Gastrocnemius medialis (tissue), 4 donors: ENCODE measurements at regions of chr11 and their contacts with region 1.

Region 1: DNA sequence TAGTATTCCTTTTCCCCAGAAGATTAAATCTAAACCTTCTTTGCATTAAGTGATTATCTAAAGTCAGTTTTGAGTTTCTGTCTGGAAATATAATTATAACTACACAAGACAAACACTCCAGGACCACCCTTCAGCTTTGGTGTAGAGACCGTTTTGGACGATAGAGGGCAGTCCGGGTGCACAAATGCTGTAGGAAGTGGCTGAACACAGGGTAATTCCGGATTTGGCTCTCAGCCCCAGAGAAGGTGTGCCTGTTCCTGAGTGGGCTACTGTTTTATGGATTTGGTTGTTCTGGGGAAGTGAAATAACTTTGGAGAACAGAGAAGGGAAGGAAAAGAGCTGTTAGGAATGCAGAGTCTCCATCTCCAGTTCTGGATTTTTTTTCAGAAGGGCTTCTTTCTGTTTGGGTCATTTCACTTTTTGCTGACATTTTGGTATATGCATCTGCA is 14.8 kb downstream of the EXT2 start:
- DNase-seq: peak; percentile 20 to 50
- ATAC-seq: peak; percentile 27 to 50
- H3K4me3 ChIP-seq: no peak overlapping the region
- H3K27ac ChIP-seq: no peak overlapping the region
- H3K4me1 ChIP-seq: peaks cover 29 to 43% of the 10 kb centered on the region in 2 donors
- H3K27me3 ChIP-seq: no peaks in the 10 kb centered on the region
- CTCF ChIP-seq: peak; percentile 56 to 80 (median 67)
- POLR2A ChIP-seq: no peak

Region 2: DNA sequence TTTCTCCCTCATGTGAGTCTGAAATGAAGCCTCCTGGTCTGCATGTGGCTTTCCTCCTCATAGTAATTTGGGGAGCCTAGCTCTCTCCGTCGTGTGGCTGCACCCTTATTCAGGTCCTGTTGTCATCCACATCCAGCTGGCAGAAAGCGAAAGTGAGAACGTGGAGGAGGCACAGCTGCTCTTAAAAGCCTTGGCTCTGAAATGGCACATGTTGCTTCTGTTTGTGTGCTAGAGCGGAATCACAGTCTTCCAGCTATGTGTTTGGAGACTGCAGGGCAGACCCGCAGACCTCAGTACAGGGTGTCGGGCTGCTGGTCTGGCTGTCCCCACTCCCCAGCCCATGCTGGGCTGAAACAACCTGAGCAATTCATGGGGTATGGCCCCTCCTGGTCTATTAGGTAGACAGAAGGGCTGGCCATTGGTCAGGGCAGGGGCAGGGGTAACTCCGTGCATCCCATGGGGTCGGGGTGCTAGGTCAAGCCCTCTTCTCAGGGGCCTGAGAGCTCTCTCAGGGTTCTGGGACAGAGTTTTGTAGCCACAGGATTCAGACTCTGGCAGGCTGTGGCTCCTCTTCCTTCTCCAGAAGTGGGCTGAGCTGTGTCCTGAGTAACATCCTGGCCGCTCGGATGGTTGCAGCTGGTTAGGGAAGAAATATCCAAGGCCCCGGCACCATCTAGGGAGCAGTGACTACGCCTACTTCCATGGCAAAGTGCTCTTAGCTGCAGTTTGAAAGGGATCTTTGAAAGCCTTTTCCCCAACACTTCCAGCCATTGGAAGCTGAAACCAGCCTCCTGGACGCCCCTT is 117.2 kb before region 1 on chr11:
- in situ Hi-C with region 1: no loop called
- intact Hi-C with region 1: no loop called
- DNase-seq: peak in 1 of 2 donors; percentile 40
- ATAC-seq: peak; percentile 60 to 77
- H3K4me3 ChIP-seq: peak overlapping the region in 3 of 4 donors; percentile 5 to 35 (median 11)
- H3K27ac ChIP-seq: peak overlapping the region in 3 of 4 donors; percentile 7 to 64 (median 61)
- H3K4me1 ChIP-seq: peaks cover 12 to 31% of the 10 kb centered on the region in 2 donors
- H3K27me3 ChIP-seq: no peaks in the 10 kb centered on the region
- CTCF ChIP-seq: no peak
- POLR2A ChIP-seq: no peak

Region 3: DNA sequence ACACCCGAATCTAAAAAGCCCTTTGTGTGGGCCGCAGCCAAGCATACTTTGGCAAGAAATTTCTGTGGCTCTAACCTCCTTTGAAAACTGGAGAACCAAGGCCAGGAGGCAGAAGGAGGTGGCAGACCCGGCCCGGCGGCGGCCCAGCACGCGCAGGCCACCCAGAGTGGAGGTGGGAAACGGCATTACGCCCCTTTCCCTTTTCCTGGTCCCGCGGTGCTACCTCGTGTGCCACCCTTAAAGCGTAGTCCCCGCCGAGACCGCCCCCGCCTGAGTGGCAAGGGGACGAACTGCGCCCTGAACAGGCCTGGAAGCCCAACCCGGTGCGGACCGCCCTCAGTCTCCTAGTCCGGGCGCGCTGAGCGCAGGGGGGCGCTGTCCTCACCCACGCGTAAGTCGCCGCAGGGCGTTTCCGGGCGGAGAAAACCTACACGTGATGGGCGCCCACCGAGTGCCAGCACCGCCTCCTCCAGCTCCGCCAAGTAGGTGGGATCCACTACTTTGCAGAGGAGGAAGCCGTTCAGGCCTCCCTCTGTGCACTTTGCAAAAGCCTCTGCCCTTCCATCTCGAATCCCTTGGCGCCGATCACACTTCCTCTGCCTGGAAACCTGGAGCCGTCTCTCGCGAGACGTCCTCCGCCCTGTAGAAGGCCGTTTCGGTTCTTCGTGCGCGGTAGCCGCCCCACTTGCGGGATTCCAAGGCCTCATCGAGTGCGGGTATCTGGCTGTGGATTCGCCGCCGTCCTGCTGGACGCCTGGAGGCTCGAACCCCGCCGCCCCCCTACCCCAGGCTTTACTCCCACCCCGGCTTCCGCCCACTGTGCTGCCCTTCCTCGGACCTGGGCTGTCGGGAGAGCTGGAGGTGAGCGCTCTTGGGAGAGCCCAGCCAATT is 44.2 kb before region 1 on chr11 and contains the start of gene ACCS:
- in situ Hi-C with region 1: no loop called
- intact Hi-C with region 1: no loop called
- DNase-seq: peak; percentile 87 to 95
- ATAC-seq: peak; percentile 92 to 93
- H3K4me3 ChIP-seq: peak within 1 kb of the TSS; percentile 66 to 80 (median 72)
- H3K27ac ChIP-seq: peak within 1 kb of the TSS; percentile 80 to 86 (median 86)
- H3K4me1 ChIP-seq: peaks cover 5 to 7% of the 10 kb centered on the region in 2 donors
- H3K27me3 ChIP-seq: no peaks in the 10 kb centered on the region
- CTCF ChIP-seq: peak; percentile 47 to 86 (median 67)
- POLR2A ChIP-seq: peak; percentile 39 to 53
- total RNA-seq, gene ACCS: 0.58 to 4.0 (median 1.8) TPM

Region 4: GRCh38 chr11:44243595-44244343 is 133.5 kb after region 1 on chr11:
- in situ Hi-C with region 1: no loop called
- intact Hi-C with region 1: loop called (anchors 5 kb)
- DNase-seq: no peak
- ATAC-seq: no peak
- H3K4me3 ChIP-seq: no peak overlapping the region
- H3K27ac ChIP-seq: no peak overlapping the region
- H3K4me1 ChIP-seq: peaks cover 65 to 67% of the 10 kb centered on the region in 2 donors
- H3K27me3 ChIP-seq: no peaks in the 10 kb centered on the region
- CTCF ChIP-seq: no peak
- POLR2A ChIP-seq: no peak

Region 5: DNA sequence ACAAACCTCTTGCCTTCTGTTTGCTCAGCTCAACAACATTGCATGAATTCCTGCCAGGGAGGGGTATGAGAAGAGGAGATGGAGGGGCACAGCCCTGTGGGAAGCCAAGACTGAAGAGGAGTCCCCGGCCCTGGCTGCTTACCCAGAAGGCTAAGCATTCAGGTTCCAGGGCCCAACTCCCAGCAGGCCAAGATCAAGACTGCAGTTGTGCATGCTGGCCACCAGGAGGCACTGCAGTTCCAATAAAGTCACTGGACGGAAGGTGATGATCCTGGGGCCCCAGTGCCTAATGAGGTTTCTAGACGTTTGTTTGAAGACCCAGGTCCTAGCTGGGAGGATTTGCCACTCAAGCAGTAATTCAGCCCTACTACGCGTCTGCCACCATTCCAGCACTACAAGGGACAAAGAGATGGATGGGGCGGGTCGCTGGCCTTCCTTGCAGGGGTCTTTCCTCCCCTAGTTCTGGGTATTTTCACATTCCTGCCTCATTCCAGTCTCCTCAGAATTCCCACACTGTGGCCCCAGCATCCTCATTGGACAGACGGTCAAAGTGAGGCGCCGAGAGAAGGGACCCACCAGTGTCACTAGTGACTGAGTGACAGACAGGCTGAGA is 176.1 kb after region 1 on chr11:
- in situ Hi-C with region 1: loop called in 1 of 4 experiments (anchors 25 kb)
- intact Hi-C with region 1: no loop called
- DNase-seq: no peak
- ATAC-seq: peak; percentile 56 to 62
- H3K4me3 ChIP-seq: no peak overlapping the region
- H3K27ac ChIP-seq: no peak overlapping the region
- H3K4me1 ChIP-seq: no peaks in the 10 kb centered on the region
- H3K27me3 ChIP-seq: peaks cover 0 to 3% (median 0%) of the 10 kb centered on the region in 3 donors
- CTCF ChIP-seq: peak; percentile 70 to 87 (median 82)
- POLR2A ChIP-seq: no peak

Region 6: DNA sequence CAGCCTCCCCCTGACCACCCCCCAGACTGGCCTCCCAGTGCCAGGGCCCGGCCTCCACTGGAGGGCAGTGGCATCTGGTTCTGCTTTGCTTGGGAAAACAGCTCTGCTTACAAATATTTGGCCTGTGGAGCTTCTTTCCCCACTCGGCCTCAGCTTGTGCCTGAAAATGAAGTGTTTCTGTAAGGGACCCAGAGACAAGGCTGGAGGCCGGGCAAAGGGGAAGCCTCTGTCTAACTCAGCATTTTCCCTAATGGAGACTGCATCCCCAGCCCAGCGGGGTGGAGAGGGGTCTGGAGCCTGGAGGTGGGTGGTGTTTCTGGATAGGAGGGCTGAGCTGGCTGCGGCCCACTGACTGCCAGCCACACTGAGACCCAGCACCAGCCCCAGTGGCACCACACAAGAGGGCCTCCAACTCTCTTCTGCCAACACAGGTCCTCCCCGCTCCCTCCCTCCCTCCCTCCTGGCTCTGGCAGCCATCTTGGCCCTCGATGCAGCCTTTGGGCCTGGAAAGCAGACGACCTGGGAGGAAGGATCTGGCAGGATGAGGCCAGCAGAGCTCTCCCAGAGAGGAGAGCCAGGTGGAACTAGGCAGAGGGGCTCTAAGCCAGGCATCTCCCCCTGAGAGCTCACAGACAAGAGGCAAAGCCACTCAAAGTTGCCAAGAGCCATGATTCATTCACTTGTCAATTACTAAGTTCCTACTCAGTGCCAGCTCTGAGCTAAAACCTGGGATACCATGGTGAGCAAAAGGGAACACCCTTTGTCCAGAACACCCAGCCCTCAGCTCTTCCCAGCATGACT is 378.1 kb after region 1 on chr11:
- in situ Hi-C with region 1: no loop called
- intact Hi-C with region 1: no loop called
- DNase-seq: no peak
- ATAC-seq: no peak
- H3K4me3 ChIP-seq: no peak overlapping the region
- H3K27ac ChIP-seq: no peak overlapping the region
- H3K4me1 ChIP-seq: no peaks in the 10 kb centered on the region
- H3K27me3 ChIP-seq: no peaks in the 10 kb centered on the region
- CTCF ChIP-seq: no peak
- POLR2A ChIP-seq: no peak